K562 (cell line): ENCODE measurements at regions of chr9 and their contacts with region 1.

Region 1: GRCh38 chr9:120985810-120986222 is 59.2 kb upstream of the TRAF1 start:
- DNase-seq: peak; percentile 25 to 68 (median 28)
- ATAC-seq: peak; percentile 80
- H3K4me3 ChIP-seq: no peak overlapping the region
- H3K27ac ChIP-seq: no peak overlapping the region
- H3K4me1 ChIP-seq: peaks cover 0 to 13% of the 10 kb centered on the region in 2 experiments; a peak in 3 of 5 replicates
- H3K27me3 ChIP-seq: no peaks in the 10 kb centered on the region
- CTCF ChIP-seq: peak; percentile 41 to 79 (median 65); a peak in 5 of 6 replicates
- EP300 ChIP-seq: peak; percentile 32; the same call in 1 of the 2 replicates
- POLR2A ChIP-seq: no peak
- RAD21 ChIP-seq: peak; percentile 72 to 75

Region 2: DNA sequence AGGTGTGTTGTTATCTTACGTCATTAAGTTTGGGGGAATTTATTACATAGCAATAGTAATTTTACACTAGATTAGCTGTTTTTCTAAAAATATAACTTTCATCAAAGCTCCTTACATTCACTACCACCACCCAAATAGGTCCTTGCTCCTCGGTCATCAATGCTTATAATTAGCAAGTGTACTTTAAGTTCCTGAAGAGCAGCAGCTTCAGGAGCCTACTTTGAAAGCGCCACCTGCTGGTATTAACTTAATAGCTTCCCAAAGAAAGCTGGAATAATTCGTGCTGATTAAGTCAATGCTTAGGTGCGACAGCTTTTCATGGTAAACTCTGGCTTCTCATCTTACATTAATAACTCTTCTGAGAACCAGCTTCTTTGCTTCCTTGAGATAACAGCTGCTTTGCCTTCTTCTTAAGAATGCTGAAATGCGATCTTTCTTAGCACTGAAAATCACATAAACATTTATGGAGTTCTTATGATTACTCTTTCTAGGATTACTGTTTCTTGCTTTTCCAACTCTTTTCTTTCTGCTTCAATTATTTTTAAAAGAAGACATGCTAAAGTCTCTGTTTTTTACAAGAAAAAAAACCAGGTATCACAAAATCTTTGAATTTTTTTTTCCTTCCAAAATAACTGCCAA is 74.3 kb after region 1 on chr9:
- CTCF ChIA-PET with region 1: interaction called, 7 read pairs
- POLR2A ChIA-PET with region 1: interaction called, 4 read pairs
- in situ Hi-C with region 1: no loop called
- intact Hi-C with region 1: loop called (anchors 1 kb)
- DNase-seq: peak; percentile 24 to 69 (median 38)
- ATAC-seq: peak; percentile 74
- H3K4me3 ChIP-seq: no peak overlapping the region
- H3K27ac ChIP-seq: no peak overlapping the region
- H3K4me1 ChIP-seq: no peaks in the 10 kb centered on the region; a peak in 1 of 5 replicates
- H3K27me3 ChIP-seq: no peaks in the 10 kb centered on the region
- CTCF ChIP-seq: peak; percentile 74 to 79 (median 74)
- EP300 ChIP-seq: no peak
- POLR2A ChIP-seq: no peak
- RAD21 ChIP-seq: peak; percentile 62 to 71

Region 3: DNA sequence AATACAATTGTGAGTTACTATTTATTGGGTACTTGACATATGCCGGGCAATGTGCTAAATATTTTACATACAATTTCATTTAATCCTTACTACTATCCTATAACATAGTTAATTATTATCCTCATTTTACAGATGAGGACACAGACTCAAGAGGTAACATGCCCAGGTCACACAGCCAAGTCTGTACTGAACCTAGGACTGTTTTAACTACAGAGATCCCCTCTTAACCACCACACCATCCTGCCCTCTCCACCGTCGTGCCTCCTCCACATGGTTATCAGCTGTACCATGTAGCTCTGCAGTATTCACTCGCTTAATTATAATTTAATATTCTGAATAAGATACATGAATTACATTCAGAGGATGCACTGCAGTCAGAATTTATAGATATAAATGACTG is 210.6 kb after region 1 on chr9:
- CTCF ChIA-PET with region 1: no interaction called
- POLR2A ChIA-PET with region 1: no interaction called
- in situ Hi-C with region 1: no loop called
- intact Hi-C with region 1: loop called (anchors 10 kb)
- DNase-seq: peak in 2 of 4 experiments; percentile 38 to 48
- ATAC-seq: peak; percentile 58
- H3K4me3 ChIP-seq: no peak overlapping the region
- H3K27ac ChIP-seq: peak overlapping the region; percentile 13; the same call in 2 of the 3 replicates
- H3K4me1 ChIP-seq: peaks cover 7 to 20% of the 10 kb centered on the region in 2 experiments; a peak in 3 of 5 replicates
- H3K27me3 ChIP-seq: no peaks in the 10 kb centered on the region
- CTCF ChIP-seq: no peak
- EP300 ChIP-seq: no peak
- POLR2A ChIP-seq: no peak
- RAD21 ChIP-seq: no peak